ENCODE measurements at regions of chr9 and their contacts with region 1.

Region 1: GRCh38 chr9:91422758-91423711 is 597 bp downstream of the NFIL3 start:
- DNase-seq: peak; percentile 76
- H3K4me3 Mint-ChIP-seq: peak overlapping the region; percentile 92
- H3K27ac Mint-ChIP-seq: peak overlapping the region; percentile 90
- H3K4me1 Mint-ChIP-seq: peaks cover 64% of the 10 kb centered on the region
- H3K27me3 Mint-ChIP-seq: peaks cover 52% of the 10 kb centered on the region

Region 2: DNA sequence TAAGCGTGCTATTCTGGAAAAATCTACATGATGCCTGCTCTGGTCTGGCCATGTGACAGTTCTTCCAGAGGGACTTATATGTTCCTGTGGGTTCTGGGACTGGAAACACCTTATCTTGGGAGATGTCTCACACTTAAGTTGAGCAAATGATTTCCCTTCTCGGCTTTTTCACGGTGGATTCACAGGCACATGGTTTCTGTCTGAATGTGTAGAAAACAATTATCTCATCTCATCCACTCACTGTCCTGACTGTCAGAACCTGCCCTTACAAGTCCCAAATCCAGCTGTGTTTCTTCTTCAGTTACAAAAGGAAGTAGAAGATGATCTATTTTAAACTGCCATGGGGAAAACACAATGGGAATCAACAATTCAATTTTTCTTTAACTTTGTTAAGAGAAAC is 437.4 kb before region 1 on chr9:
- CTCF ChIA-PET with region 1: interaction called, 15 read pairs
- DNase-seq: no peak
- H3K4me3 Mint-ChIP-seq: no peak overlapping the region
- H3K27ac Mint-ChIP-seq: no peak overlapping the region
- H3K4me1 Mint-ChIP-seq: no peaks in the 10 kb centered on the region
- H3K27me3 Mint-ChIP-seq: peaks cover 25% of the 10 kb centered on the region